ENCODE measurements at regions of chr6 and their contacts with region 1.

Region 1: GRCh38 chr6:31197559-31198305 is 27.2 kb upstream of the POU5F1 start:
- DNase-seq: peak; percentile 97
- H3K4me3 Mint-ChIP-seq: peak overlapping the region; percentile 91
- H3K27ac Mint-ChIP-seq: peak overlapping the region; percentile 97
- H3K4me1 Mint-ChIP-seq: peaks cover 61% of the 10 kb centered on the region
- H3K27me3 Mint-ChIP-seq: no peaks in the 10 kb centered on the region

Region 2: GRCh38 chr6:31139599-31139998 is 58.1 kb before region 1 on chr6:
- CTCF ChIA-PET with region 1: interaction called, 21 read pairs
- POLR2A ChIA-PET with region 1: interaction called, 12 read pairs
- DNase-seq: no peak
- H3K4me3 Mint-ChIP-seq: no peak overlapping the region
- H3K27ac Mint-ChIP-seq: no peak overlapping the region
- H3K4me1 Mint-ChIP-seq: peaks cover 8% of the 10 kb centered on the region
- H3K27me3 Mint-ChIP-seq: no peaks in the 10 kb centered on the region

Region 3: GRCh38 chr6:31158140-31158862 is 39.4 kb before region 1 on chr6 and contains the start of gene TCF19:
- CTCF ChIA-PET with region 1: interaction called, 8 read pairs
- POLR2A ChIA-PET with region 1: interaction called, 21 read pairs
- DNase-seq: peak; percentile 100
- H3K4me3 Mint-ChIP-seq: peak within 1 kb of the TSS; percentile 79
- H3K27ac Mint-ChIP-seq: peak within 1 kb of the TSS; percentile 62
- H3K4me1 Mint-ChIP-seq: peaks cover 52% of the 10 kb centered on the region
- H3K27me3 Mint-ChIP-seq: no peaks in the 10 kb centered on the region
- total RNA-seq, gene TCF19: 78.9 to 80.7 TPM

Region 4: DNA sequence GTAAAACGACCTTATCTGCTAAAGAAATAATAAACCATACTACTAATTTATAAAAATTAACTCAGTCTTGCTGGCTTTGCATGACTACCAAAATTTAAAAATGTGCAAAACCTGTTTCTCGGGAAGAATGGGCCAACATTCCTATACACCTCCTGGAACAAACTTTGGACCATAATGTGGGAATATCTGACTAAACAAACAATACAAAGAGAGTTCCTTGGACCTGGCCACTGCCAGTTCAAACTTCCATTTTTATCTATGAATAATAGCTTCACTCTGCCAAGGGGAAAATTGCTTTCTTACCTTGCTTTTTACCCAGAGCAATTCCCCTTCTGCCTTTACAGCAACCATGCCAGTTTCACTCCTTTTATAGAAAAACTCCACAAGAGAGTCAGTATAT is 11.4 kb after region 1 on chr6:
- CTCF ChIA-PET with region 1: interaction called, 4 read pairs
- POLR2A ChIA-PET with region 1: interaction called, 11 read pairs
- DNase-seq: no peak
- H3K4me3 Mint-ChIP-seq: no peak overlapping the region
- H3K27ac Mint-ChIP-seq: no peak overlapping the region
- H3K4me1 Mint-ChIP-seq: peaks cover 13% of the 10 kb centered on the region
- H3K27me3 Mint-ChIP-seq: no peaks in the 10 kb centered on the region

Region 5: DNA sequence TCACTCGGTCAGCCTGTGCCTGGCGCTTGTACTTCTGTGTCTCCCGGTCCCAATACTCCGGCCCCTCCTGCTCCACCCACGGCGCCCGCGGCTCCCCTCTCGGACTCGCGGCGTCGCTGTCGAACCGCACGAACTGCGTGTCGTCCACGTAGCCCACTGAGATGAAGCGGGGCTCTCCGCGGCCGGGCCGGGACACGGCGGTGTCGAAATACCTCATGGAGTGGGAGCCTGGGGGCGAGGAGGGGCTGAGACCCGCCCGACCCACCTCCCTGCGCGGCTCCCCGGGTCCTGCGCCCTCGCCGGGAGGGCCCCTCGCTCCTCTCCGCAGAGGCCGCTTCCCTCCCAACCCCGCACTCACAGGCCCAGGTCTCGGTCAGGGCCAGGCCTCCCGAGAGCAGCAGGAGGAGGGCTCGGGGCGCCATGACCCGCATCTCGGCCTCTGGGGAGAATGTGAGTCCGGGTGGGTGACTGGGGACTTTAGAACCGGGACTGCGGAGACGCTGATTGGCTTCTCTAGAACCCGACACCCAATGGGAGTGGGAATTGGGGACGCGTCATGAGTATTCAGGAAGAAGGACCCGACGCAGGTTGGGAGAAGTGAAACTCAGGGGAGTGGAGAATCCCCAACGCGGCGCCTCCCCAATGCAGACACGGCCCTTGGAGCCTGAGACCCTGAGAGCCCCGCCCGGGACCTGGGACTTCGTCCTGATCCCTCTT is 74.1 kb after region 1 on chr6 and contains the start of gene HLA-C:
- CTCF ChIA-PET with region 1: interaction called, 3 read pairs
- POLR2A ChIA-PET with region 1: interaction called, 32 read pairs
- DNase-seq: peak; percentile 94
- H3K4me3 Mint-ChIP-seq: peak within 1 kb of the TSS; percentile 96
- H3K27ac Mint-ChIP-seq: peak within 1 kb of the TSS; percentile 99
- H3K4me1 Mint-ChIP-seq: peaks cover 56% of the 10 kb centered on the region
- H3K27me3 Mint-ChIP-seq: peaks cover 14% of the 10 kb centered on the region
- total RNA-seq, gene HLA-C: 1,690 to 1,696 TPM

Region 6: DNA sequence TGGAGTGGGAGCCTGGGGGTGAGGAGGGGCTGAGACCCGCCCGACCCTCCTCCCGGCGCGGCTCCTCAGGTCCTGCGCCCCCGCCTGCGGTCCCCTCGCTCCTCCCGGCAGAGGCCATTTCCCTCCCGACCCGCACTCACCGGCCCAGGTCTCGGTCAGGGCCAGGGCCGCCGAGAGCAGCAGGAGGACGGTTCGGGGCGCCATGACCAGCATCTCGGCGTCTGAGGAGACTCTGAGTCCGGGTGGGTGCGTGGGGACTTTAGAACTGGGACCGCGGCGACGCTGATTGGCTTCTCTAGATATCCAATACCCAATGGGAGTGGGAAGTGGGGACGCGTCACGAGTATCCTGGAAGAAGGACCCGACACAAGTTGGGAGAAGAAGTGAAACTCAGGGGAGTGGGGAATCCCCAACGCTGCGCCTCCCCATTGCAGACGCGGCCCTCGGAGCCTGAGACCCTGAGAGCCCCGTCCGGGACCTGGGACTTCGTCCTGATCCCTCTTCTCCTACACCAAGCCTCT is 159.3 kb after region 1 on chr6 and contains the start of gene HLA-B:
- CTCF ChIA-PET with region 1: interaction called, 6 read pairs
- POLR2A ChIA-PET with region 1: interaction called, 36 read pairs
- DNase-seq: peak; percentile 87
- H3K4me3 Mint-ChIP-seq: peak within 1 kb of the TSS; percentile 99
- H3K27ac Mint-ChIP-seq: peak within 1 kb of the TSS; percentile 99
- H3K4me1 Mint-ChIP-seq: peaks cover 57% of the 10 kb centered on the region
- H3K27me3 Mint-ChIP-seq: peaks cover 3% of the 10 kb centered on the region
- total RNA-seq, gene HLA-B: 5,151 to 5,157 TPM

Region 7: GRCh38 chr6:31366693-31367470 is 169.2 kb after region 1 on chr6:
- CTCF ChIA-PET with region 1: interaction called, 93 read pairs
- POLR2A ChIA-PET with region 1: interaction called, 52 read pairs
- DNase-seq: peak; percentile 86
- H3K4me3 Mint-ChIP-seq: peak overlapping the region; percentile 45
- H3K27ac Mint-ChIP-seq: no peak overlapping the region
- H3K4me1 Mint-ChIP-seq: peaks cover 13% of the 10 kb centered on the region
- H3K27me3 Mint-ChIP-seq: peaks cover 37% of the 10 kb centered on the region

Region 8: DNA sequence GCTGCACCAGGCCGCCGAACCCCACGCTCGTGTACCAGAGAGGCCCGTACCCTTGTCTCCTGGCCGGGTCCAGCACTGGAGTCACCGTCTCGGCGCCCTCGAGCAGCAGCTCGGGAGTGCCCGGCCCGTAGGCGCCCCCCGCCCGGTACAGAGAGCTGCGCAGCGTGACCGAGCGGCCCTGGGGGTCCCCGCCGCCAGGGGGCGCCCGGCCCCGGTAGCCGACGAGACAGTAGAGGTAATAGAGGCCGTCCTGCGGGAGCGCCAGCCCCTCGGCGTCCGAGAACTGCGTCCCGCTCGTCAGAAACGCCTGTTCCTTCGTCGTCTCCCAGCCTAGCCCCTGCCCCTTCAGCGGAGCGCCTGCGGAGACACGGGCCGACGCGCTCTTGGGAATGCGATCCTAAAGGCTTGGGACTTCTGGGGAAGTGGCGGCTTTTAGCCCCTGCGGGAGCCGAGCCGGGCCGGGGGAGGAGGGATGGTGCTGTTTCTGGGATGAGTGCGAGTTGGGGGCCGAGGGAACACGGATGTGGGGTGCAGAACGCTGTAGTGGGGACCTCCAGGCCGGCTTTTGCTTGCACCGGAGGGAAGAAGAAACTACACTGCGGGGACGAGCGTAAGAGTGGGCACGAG is 383.2 kb after region 1 on chr6:
- CTCF ChIA-PET with region 1: no interaction called
- POLR2A ChIA-PET with region 1: no interaction called
- DNase-seq: peak; percentile 89
- H3K4me3 Mint-ChIP-seq: peak overlapping the region; percentile 91
- H3K27ac Mint-ChIP-seq: peak overlapping the region; percentile 94
- H3K4me1 Mint-ChIP-seq: peaks cover 58% of the 10 kb centered on the region
- H3K27me3 Mint-ChIP-seq: no peaks in the 10 kb centered on the region

Measured in activated CD4-positive, alpha-beta memory T cell treated with anti-CD3 and anti-CD28 coated beads, Interleukin-2, amount 10 ng/mL, durations not matched to agents 7 days and 5 days (primary cell).